ENCODE measurements at regions of chr22 and their contacts with region 1.

Region 1: DNA sequence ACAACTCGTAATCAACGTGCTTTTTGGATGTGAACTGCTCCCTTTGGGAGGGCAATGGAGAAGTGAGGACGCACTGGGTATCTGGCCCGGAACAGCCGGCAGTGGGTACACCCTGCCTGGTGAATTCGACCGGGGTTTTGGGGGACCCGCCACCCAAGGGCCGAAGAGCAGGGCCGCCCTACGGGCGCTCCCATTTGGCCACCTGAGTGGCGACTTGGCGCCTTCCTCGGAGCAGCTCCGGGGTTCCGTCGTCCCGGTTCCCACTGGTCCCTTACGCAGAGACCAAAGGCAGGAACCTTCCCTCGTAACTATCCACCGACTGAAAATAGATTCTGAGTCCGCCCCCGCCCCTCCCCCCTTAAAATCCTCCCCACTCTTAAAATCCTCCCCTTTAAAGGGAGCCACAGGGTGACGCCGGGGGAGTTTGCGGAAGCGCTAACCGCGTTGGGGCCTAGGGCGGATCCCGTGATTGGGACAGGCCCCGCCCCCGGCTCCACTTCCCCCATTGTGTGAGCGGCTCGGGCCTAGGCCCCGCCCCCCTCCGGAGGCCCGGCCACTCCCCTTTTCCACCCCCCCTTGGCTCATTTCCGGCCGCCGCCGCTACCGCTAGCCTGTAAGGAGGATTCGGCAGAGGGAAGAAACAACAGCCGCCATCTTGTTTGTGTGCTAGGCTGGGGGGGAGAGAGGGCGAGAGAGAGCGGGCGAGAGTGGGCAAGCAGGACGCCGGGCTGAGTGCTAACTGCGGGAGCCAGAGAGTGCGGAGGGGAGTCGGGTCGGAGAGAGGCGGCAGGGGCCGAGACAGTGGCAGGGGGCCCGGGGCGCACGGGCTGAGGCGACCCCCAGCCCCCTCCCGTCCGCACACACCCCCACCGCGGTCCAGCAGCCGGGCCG is 1.0 kb upstream of the EP300 start:
- DNase-seq: peak; percentile 99 to 100 (median 99)
- ATAC-seq: peak; percentile 95
- H3K4me3 ChIP-seq: peak overlapping the region; percentile 92
- H3K4me1 ChIP-seq: peaks cover 9% of the 10 kb centered on the region
- CTCF ChIP-seq: no peak

Region 2: DNA sequence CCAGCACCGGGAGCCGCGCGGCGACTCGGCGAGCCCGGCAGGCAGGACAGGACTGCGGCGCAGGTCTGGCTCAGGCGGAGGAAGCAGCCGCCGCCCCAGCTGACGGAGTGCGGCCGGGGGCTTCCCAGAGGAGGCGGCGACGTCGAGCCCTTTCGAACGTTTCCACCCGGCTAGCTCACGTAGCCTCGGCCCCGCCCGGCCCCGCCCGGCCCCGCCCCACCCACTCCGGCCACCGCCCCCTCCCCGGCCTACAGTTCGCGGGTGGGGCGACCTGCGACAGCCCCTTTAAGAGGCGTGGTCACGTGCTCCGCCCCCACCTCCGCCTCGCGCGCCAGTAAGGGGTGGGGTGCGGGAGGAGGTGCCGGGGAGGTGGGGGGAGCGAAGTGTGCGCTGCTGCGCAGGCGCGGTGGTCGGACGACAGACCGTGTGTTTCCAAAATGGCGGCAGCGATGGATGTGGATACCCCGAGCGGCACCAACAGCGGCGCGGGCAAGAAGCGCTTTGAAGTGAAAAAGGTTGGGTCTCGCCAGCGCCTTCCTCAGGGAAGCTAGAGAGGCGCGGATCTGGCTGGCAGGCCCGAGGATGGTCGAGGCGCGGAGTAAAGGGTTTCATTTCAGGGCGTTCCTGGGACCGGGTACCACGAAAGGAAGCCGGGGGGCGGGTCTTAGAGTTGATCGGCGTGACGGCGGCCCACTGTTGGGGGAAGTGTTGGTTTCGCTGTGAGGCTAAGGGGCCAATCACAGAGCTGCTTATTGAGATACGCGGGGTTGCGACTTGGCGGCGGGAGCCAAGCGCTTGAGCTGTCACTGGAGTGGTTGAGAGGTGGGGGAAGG is 140.2 kb before region 1 on chr22 and contains the start of gene RBX1:
- intact Hi-C with region 1: loop called (anchors 5 to 10 kb)
- DNase-seq: peak; percentile 99 to 100 (median 99)
- ATAC-seq: peak; percentile 95
- H3K4me3 ChIP-seq: peak within 1 kb of the TSS; percentile 66
- H3K4me1 ChIP-seq: peaks cover 10% of the 10 kb centered on the region
- CTCF ChIP-seq: no peak
- total RNA-seq, gene RBX1: 29.3 to 40.7 (median 38.2) TPM

Region 3: GRCh38 chr22:41022470-41023298 is 68.7 kb before region 1 on chr22:
- intact Hi-C with region 1: loop called in 1 of 2 experiments (anchors 10 kb)
- DNase-seq: peak; percentile 96
- ATAC-seq: peak; percentile 92
- H3K4me3 ChIP-seq: peak overlapping the region; percentile 33
- H3K4me1 ChIP-seq: peaks cover 6% of the 10 kb centered on the region
- CTCF ChIP-seq: no peak